ENCODE measurements at regions of chr20 and their contacts with region 1.

Region 1: DNA sequence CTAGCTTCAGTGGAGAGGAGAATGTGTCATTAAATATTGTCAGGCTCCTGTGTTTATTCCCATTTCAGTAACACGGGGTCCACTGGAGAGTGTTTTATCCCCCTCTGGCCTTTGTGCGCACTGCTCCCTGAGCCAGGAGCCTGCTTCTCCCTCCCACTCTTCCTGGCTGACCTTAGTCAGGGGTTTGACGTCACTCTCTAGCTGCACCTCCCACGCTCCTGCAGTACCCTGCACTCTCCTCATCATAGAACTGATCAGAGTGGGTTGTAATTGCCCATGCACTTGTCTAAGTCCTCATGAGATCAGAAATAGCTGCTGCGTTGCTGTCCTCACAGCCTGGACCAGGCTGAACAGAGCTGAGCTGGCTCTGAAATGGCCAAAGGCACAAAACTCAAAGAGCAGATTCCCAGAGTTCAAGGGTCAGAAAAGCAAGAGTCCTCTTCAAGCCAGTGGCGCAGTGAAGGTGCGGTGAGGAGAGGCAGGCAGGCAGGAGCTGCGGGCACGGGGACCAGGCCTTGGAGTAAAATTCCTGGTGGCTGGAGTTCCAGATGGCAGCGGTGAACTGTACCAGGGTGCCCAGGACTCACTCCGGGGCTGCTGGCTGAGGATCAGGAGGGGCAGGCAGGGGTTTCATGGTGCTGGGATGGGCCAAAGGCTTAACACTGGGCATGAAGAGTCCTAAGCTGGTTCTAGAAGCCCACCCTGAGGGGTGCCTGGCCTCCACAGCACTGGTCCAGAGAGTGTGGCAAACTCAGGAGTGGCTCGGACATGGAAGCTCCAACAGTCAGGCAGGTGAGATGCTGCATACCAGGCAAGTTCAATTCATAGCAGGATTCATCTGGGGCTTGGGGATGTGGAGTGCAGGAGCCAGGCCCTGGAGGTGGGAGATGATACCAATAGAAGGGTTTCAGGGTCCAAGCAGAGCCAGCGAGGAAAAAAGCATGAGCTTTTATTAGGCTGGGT is 170.9 kb downstream of the SCP2D1 start:
- DNase-seq: peak; percentile 66
- H3K4me3 ChIP-seq: no peak overlapping the region
- H3K27ac ChIP-seq: peak overlapping the region; percentile 3 to 70
- H3K4me1 ChIP-seq: peaks cover 35% of the 10 kb centered on the region
- H3K27me3 ChIP-seq: no peaks in the 10 kb centered on the region
- CTCF ChIP-seq: no peak
- POLR2A ChIP-seq: no peak

Region 2: DNA sequence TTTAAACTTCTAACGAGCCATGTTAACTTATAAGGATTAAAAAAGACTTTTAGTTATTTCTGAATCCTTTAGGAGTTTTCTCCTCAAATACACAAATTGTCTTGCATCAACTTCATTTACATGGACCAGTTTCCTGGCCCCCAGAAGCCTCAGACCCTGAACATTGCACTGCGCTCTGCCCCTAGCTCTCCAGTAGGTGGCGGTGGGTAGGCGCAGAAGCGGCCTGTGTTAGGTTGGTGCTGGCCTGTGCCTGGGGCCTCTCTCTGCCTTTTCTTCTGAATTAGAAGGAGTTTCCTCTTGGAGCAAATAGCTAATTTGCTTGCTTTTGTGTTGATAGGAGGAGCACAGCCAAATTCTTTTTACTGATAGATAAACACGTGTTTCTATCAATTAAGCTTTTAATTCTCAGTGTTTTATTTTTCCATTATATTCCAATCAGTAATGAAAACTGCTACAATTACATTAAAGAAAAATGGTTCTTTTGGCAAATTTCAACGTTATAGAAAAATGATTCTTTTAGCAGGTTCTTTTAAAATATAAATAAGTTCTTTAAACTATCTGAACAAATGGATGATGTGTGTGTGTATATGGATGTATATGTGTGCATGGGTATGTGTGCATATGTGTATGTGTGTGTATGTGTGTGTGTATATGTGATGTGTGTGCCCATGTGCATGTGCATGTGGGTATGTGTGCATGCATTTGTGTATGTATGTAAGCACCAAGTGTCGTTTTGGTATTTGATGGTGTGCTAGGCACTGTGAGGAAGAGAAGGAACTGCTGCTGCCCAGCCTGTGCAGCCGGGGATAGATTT is 352.1 kb before region 1 on chr20:
- intact Hi-C with region 1: loop called (anchors 5 kb)
- DNase-seq: peak; percentile 83
- H3K4me3 ChIP-seq: no peak overlapping the region
- H3K27ac ChIP-seq: no peak overlapping the region
- H3K4me1 ChIP-seq: peaks cover 6% of the 10 kb centered on the region
- H3K27me3 ChIP-seq: no peaks in the 10 kb centered on the region
- CTCF ChIP-seq: peak; percentile 69 to 87 (median 76)
- POLR2A ChIP-seq: no peak